HepG2 (cell line): ENCODE measurements at regions of chr1 and their contacts with region 1.

Region 1: GRCh38 chr1:23727362-23727827 is 15.9 kb upstream of the ELOA start:
- DNase-seq: peak; percentile 78
- ATAC-seq: peak; percentile 89
- H3K4me3 ChIP-seq: peak overlapping the region in 1 of 3 experiments; percentile 24; a peak in 3 of 6 replicates
- H3K27ac ChIP-seq: peak overlapping the region; percentile 54
- H3K4me1 ChIP-seq: peaks cover 38% of the 10 kb centered on the region
- H3K27me3 ChIP-seq: no peaks in the 10 kb centered on the region
- CTCF ChIP-seq: no peak
- EP300 ChIP-seq: peak in 1 of 2 experiments; percentile 59; a peak in 1 of 4 replicates
- POLR2A ChIP-seq: no peak
- RAD21 ChIP-seq: no peak

Region 2: GRCh38 chr1:23743287-23744052 is 16.1 kb after region 1 on chr1 and contains the start of gene ELOA:
- CTCF ChIA-PET with region 1: no interaction called
- POLR2A ChIA-PET with region 1: interaction called, 21 read pairs
- in situ Hi-C with region 1: no loop called
- intact Hi-C with region 1: no loop called
- DNase-seq: peak; percentile 35
- ATAC-seq: peak; percentile 93
- H3K4me3 ChIP-seq: peak within 1 kb of the TSS; percentile 81 to 98 (median 93)
- H3K27ac ChIP-seq: peak within 1 kb of the TSS; percentile 79
- H3K4me1 ChIP-seq: peaks cover 37% of the 10 kb centered on the region
- H3K27me3 ChIP-seq: no peaks in the 10 kb centered on the region; a peak in 1 of 5 replicates
- CTCF ChIP-seq: no peak; the same call in 1 of the 2 replicates
- EP300 ChIP-seq: no peak
- POLR2A ChIP-seq: peak; percentile 77 to 95
- RAD21 ChIP-seq: peak; percentile 23; the same call in 1 of the 2 replicates
- total RNA-seq, gene ELOA: 28.5 and 36.3 TPM in 2 replicates

Region 3: DNA sequence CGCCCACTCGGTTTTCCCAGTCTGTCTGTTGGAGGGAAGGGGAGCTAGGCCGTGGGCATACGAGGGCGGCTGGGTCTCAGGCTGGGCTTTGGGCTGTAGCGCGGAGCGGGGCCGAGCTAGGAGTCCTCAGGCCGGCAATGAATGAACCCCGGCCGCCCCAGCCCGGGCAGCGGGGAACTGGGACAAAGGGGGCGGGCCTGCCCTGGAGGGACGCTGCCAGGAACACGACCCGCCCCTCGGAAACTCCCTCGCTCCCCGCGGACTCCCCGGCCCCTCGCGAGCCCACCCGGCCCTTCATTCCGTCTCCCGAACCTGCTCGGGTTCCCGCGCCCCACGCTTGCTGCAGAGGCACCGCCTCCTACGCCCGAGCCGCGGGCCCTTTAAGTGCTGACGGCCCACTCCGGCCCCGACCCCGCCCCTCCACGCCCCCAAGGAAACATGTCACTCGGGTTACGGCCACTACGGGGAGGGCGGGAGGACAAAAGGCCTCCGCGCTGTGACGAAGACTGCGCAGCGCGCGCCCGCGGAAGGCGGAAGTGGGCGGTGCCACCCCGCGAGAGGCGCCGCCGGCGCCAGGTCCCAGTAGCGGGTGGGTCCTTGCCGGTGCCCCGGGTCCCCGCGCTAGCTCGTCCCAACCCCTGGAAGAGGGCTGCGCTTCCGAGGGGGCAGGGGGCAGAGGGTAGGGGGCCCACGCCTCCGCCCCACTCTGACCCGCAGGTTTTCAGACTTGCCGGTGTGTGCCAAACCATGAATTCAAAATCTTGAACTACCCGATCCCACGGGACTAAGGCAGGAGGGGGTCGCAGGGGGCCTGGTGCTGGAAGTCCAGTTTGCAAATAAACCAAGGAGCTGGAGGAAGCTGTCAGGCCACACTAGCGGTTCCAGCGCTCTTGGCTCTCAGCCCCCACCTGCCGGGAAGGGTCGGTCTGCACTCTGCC is 73.3 kb after region 1 on chr1 and contains the start of gene GALE:
- CTCF ChIA-PET with region 1: no interaction called
- POLR2A ChIA-PET with region 1: no interaction called
- in situ Hi-C with region 1: no loop called
- intact Hi-C with region 1: no loop called
- DNase-seq: peak; percentile 89
- ATAC-seq: peak; percentile 75
- H3K4me3 ChIP-seq: peak within 1 kb of the TSS; percentile 65 to 92 (median 90)
- H3K27ac ChIP-seq: peak within 1 kb of the TSS; percentile 95
- H3K4me1 ChIP-seq: peaks cover 66% of the 10 kb centered on the region
- H3K27me3 ChIP-seq: no peaks in the 10 kb centered on the region; a peak in 1 of 5 replicates
- CTCF ChIP-seq: no peak
- EP300 ChIP-seq: peak in 1 of 2 experiments; percentile 34; a peak in 1 of 4 replicates
- POLR2A ChIP-seq: peak in 1 of 2 experiments; percentile 59; a peak in 2 of 4 replicates
- RAD21 ChIP-seq: peak; percentile 60; the same call in 1 of the 2 replicates
- total RNA-seq, gene GALE: 85.2 and 86.6 TPM in 2 replicates